ENCODE measurements at regions of chr14 and their contacts with region 1.

Region 1: GRCh38 chr14:77491056-77491455 is 7.6 kb downstream of the ISM2 start:
- DNase-seq: no peak
- H3K4me3 ChIP-seq: no peak overlapping the region
- H3K27ac ChIP-seq: no peak overlapping the region
- H3K4me1 ChIP-seq: no peaks in the 10 kb centered on the region
- H3K27me3 ChIP-seq: no peaks in the 10 kb centered on the region
- CTCF ChIP-seq: no peak
- EP300 ChIP-seq: no peak
- POLR2A ChIP-seq: no peak
- RAD21 ChIP-seq: no peak

Region 2: DNA sequence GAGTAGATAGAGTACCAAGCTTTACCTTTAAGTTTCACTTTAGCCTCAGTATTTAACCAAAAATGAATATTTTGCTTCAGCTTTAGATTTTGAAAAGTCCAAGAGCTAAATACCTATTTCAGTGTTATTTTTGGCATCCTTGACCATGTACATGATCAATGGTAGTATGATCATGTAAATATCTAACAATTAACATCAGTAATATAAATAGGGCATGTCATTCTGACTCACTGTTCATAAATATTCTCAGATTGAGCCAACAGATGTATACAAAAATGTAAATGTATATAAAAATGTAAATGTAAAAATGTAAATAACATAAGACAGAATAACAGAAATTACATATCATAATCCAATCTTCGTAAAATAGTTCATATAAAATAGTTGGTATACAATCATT is 52.5 kb before region 1 on chr14:
- CTCF ChIA-PET with region 1: no interaction called
- POLR2A ChIA-PET with region 1: no interaction called
- DNase-seq: no peak
- H3K4me3 ChIP-seq: no peak overlapping the region
- H3K27ac ChIP-seq: no peak overlapping the region
- H3K4me1 ChIP-seq: no peaks in the 10 kb centered on the region
- H3K27me3 ChIP-seq: no peaks in the 10 kb centered on the region
- CTCF ChIP-seq: no peak
- EP300 ChIP-seq: no peak
- POLR2A ChIP-seq: no peak
- RAD21 ChIP-seq: no peak

Region 3: GRCh38 chr14:77478796-77479195 is 12.3 kb before region 1 on chr14:
- CTCF ChIA-PET with region 1: interaction called, 14 read pairs
- POLR2A ChIA-PET with region 1: interaction called, 3 read pairs
- DNase-seq: no peak
- H3K4me3 ChIP-seq: no peak overlapping the region
- H3K27ac ChIP-seq: no peak overlapping the region
- H3K4me1 ChIP-seq: no peaks in the 10 kb centered on the region
- H3K27me3 ChIP-seq: no peaks in the 10 kb centered on the region
- CTCF ChIP-seq: no peak
- EP300 ChIP-seq: no peak
- POLR2A ChIP-seq: no peak
- RAD21 ChIP-seq: no peak